Posterior vena cava (tissue), 2 donors: ENCODE measurements at regions of chr1 and their contacts with region 1.

Region 1: DNA sequence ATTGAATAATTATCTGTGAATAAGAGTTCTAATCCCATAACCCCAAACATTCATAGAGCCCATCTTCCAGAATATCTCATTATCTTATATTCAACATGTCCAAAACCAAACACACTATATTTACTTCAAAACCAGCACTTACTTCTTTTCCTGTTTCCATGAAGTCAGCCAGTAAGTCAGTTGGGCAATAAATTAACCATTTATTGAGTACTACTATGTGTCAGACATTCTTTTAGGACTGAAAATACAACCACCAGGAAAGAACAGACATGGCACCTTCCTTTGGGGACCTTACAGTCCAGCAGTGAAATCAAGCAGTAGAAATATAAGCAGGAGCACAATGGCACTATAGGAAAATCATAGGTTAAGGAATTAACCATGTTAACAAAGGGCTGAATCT is 8.8 kb downstream of the AK5 start:
- DNase-seq: no peak

Region 2: DNA sequence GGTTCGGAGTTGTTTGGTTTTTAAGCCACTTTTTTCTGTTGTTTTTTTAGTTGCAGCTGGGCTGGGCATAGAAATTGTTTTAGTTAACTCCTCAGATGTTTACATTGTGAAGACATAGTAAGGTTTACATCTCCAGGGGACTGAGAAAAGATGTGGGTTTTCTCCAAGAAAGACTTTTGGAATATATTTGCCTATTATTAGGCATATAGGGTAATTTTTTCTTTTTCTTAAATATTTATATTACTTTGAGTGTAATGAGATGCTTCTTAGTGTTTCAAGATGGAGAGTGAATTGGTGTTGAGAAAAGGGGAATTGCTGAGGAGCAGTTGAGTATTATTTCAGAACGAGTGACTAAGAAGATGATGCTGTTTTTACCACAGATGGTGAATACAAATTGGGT is 44.7 kb before region 1 on chr1:
- intact Hi-C with region 1: loop called in 1 of 2 experiments (anchors 1 kb)
- DNase-seq: no peak

Region 3: DNA sequence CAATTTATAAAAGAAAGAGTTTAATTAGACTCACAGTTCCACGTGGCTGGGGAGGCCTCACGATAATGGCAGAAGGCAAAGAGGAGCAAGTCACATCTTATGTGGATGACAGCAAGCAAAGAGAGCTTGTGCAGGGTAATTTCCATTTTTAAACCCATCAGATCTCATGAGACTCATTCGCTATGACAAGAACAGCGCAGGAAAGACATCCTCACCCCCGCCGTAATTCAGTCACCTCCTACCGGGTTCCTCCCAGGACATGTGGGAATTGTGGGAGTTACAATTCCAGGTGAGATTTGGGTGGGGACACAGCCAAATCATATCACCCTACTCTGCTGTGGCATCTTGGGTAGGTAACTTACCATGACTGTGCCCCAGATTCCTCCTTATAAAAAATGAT is 71.0 kb after region 1 on chr1:
- intact Hi-C with region 1: loop called in 1 of 2 experiments (anchors 2 kb)
- DNase-seq: no peak

Region 4: GRCh38 chr1:77430966-77431690 is 140.6 kb after region 1 on chr1:
- intact Hi-C with region 1: no loop called
- DNase-seq: no peak